HCT116 (cell line): ENCODE measurements at regions of chr3 and their contacts with region 1.

Region 1: GRCh38 chr3:25843332-25843731 is 53.4 kb downstream of the OXSM start:
- DNase-seq: no peak
- ATAC-seq: no peak
- H3K4me3 ChIP-seq: no peak overlapping the region
- H3K27ac ChIP-seq: no peak overlapping the region
- H3K4me1 ChIP-seq: no peaks in the 10 kb centered on the region
- H3K27me3 ChIP-seq: no peaks in the 10 kb centered on the region
- CTCF ChIP-seq: 0 out of 6 replicates have a peak, but pooled peaks of 1 of the 3 experiments have one; percentile 12
- POLR2A ChIP-seq: no peak
- RAD21 ChIP-seq: peak; percentile 29; the same call in 1 of the 2 replicates

Region 2: DNA sequence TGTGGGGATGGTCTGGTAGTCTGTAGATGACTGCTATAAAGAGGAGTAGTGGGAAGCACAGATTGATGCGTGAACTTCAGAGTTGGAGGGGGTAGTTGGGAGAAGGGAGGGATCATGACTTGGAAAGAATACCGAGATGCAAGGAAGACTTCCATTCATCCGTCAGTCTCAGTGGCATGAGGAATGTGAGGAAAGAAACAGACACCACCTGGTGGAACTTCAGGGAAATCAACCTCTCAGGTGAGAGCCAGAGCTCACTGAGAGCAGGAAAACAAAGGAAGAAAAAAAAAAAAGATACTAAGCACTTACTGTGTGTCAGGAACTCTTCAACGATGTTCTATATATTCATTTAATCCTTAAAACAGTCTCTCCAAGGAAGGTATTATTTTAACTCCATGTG is 118.9 kb after region 1 on chr3:
- CTCF ChIA-PET with region 1: no interaction called
- POLR2A ChIA-PET with region 1: no interaction called
- RAD21 ChIA-PET with region 1: no interaction called
- intact Hi-C with region 1: loop called (anchors 10 kb)
- DNase-seq: peak; percentile 13
- ATAC-seq: peak; percentile 90
- H3K4me3 ChIP-seq: no peak overlapping the region
- H3K27ac ChIP-seq: no peak overlapping the region
- H3K4me1 ChIP-seq: no peaks in the 10 kb centered on the region
- H3K27me3 ChIP-seq: no peaks in the 10 kb centered on the region
- CTCF ChIP-seq: peak; percentile 14 to 58 (median 44); a peak in 4 of 6 replicates
- POLR2A ChIP-seq: no peak
- RAD21 ChIP-seq: peak; percentile 47

Region 3: DNA sequence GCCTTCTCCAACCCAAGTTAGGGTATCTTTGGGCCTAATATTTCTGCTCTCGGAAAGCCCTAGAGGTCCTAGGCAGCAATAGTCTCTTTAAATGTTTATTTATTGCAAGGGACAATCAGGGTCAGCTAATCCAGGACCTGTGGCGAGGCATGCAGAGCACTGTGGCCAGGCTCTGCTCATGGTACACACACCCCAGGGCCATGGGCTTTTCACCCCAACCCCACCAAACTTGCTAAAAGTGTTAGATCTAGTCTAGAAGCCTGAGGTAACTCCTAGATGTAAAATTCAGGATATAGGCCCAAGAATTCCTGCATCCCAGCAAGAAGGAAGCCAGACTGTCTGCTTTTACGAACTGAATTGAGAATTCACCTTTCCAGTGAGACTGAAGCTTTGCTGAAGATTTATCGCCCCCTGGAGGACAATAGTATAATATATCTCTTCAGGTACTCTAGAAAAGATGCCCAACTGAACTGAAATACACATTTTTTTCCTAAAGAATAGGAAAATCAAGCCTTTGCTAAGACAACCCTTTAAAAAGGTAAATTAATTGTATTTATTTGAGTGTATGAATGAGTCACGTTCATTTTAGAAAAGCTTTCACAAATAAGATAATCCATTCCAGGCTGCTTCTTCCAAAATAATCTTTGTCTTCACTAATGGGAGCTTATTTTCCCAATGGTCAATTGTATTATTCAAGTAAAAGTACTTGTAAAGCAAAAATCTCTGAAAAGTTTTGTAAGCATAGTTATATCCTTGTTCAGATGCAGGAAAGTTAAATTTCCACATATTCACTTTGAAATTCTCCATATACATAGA is 869.1 kb after region 1 on chr3:
- CTCF ChIA-PET with region 1: no interaction called
- POLR2A ChIA-PET with region 1: no interaction called
- RAD21 ChIA-PET with region 1: no interaction called
- intact Hi-C with region 1: loop called (anchors 5 kb)
- DNase-seq: peak; percentile 3
- ATAC-seq: no peak
- H3K4me3 ChIP-seq: no peak overlapping the region
- H3K27ac ChIP-seq: no peak overlapping the region
- H3K4me1 ChIP-seq: no peaks in the 10 kb centered on the region
- H3K27me3 ChIP-seq: no peaks in the 10 kb centered on the region
- CTCF ChIP-seq: peak; percentile 25 to 65 (median 34); a peak in 4 of 6 replicates
- POLR2A ChIP-seq: no peak
- RAD21 ChIP-seq: peak; percentile 51